MCF 10A (cell line): ENCODE measurements at regions of chr5 and their contacts with region 1.

Region 1: GRCh38 chr5:63401436-63402046 is 560.7 kb downstream of the HTR1A start:
- DNase-seq: peak; percentile 77
- H3K4me3 Mint-ChIP-seq: no peak overlapping the region
- H3K27ac Mint-ChIP-seq: no peak overlapping the region
- H3K4me1 Mint-ChIP-seq: no peaks in the 10 kb centered on the region
- H3K27me3 Mint-ChIP-seq: peaks cover 12% of the 10 kb centered on the region
- CTCF ChIP-seq: peak; percentile 69

Region 2: DNA sequence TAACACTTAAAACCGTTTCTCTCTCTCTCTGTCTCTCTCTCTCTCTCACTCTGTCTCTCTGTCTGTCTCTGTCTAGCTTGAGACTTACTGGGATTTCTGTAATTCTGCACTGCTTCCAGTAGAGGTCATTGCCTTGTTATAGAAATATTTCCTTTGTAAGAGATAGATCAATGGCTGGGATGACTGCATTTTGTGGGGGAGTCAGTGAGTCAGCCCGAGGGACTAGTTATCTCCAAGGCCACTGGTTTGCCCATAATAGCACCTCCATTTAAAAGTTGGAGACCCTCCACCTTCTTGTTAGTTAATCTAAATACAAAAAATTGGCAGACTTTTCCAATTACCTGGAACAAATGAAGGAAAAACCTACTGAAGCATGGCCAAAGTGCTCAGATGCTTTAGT is 275.7 kb before region 1 on chr5:
- CTCF ChIA-PET with region 1: interaction called, 33 read pairs
- POLR2A ChIA-PET with region 1: no interaction called
- intact Hi-C with region 1: loop called (anchors 2 kb)
- DNase-seq: peak; percentile 59
- H3K4me3 Mint-ChIP-seq: no peak overlapping the region
- H3K27ac Mint-ChIP-seq: no peak overlapping the region
- H3K4me1 Mint-ChIP-seq: peaks cover 7% of the 10 kb centered on the region
- H3K27me3 Mint-ChIP-seq: no peaks in the 10 kb centered on the region
- CTCF ChIP-seq: peak; percentile 50

Region 3: GRCh38 chr5:63822614-63823013 is 421.1 kb after region 1 on chr5:
- CTCF ChIA-PET with region 1: interaction called, 33 read pairs
- POLR2A ChIA-PET with region 1: interaction called, 4 read pairs
- intact Hi-C with region 1: loop called (anchors 1 kb)
- DNase-seq: peak; percentile 1
- H3K4me3 Mint-ChIP-seq: no peak overlapping the region
- H3K27ac Mint-ChIP-seq: no peak overlapping the region
- H3K4me1 Mint-ChIP-seq: no peaks in the 10 kb centered on the region
- H3K27me3 Mint-ChIP-seq: no peaks in the 10 kb centered on the region
- CTCF ChIP-seq: peak; percentile 27

Region 4: GRCh38 chr5:64063518-64063917 is 662.0 kb after region 1 on chr5:
- CTCF ChIA-PET with region 1: interaction called, 5 read pairs
- POLR2A ChIA-PET with region 1: no interaction called
- intact Hi-C with region 1: loop called (anchors 2 kb)
- DNase-seq: no peak
- H3K4me3 Mint-ChIP-seq: no peak overlapping the region
- H3K27ac Mint-ChIP-seq: no peak overlapping the region
- H3K4me1 Mint-ChIP-seq: no peaks in the 10 kb centered on the region
- H3K27me3 Mint-ChIP-seq: no peaks in the 10 kb centered on the region
- CTCF ChIP-seq: no peak

Region 5: DNA sequence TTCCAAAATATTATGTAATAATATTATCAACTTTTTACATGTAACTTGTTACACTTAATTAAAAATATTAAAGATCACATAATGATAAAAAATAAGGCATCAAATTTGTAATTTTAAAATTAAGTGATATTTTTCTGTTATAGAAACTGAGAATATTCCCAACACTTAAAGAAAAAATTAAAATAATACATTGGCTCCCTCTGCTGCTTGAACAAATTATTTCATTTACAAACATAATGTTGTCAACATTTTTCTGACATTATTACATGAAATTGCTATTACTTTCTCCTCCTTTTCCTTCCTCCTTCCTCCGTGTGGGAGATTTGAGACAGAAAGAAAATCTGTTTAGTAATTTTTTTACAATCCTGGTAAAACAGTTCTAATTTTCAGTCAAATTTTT is 806.4 kb after region 1 on chr5:
- CTCF ChIA-PET with region 1: interaction called, 3 read pairs
- POLR2A ChIA-PET with region 1: no interaction called
- intact Hi-C with region 1: loop called (anchors 5 kb)
- DNase-seq: peak; percentile 34
- H3K4me3 Mint-ChIP-seq: no peak overlapping the region
- H3K27ac Mint-ChIP-seq: no peak overlapping the region
- H3K4me1 Mint-ChIP-seq: peaks cover 24% of the 10 kb centered on the region
- H3K27me3 Mint-ChIP-seq: no peaks in the 10 kb centered on the region
- CTCF ChIP-seq: peak; percentile 43